Activated CD8-positive, alpha-beta T cell treated with anti-CD3 and anti-CD28 coated beads, Interleukin-2, amount 10 ng/mL, durations not matched to agents 7 days and 5 days (primary cell): ENCODE measurements at regions of chr5 and their contacts with region 1.

Region 1: GRCh38 chr5:150409638-150410523 is 2.8 kb downstream of the CD74 start:
- DNase-seq: peak; percentile 65
- ATAC-seq: no peak
- H3K4me3 Mint-ChIP-seq: peak overlapping the region; percentile 98
- H3K27ac Mint-ChIP-seq: peak overlapping the region; percentile 100
- H3K4me1 Mint-ChIP-seq: peaks cover 45% of the 10 kb centered on the region
- H3K27me3 Mint-ChIP-seq: no peaks in the 10 kb centered on the region

Region 2: GRCh38 chr5:150112261-150113046 is 297.4 kb before region 1 on chr5:
- CTCF ChIA-PET with region 1: no interaction called
- POLR2A ChIA-PET with region 1: no interaction called
- DNase-seq: peak; percentile 18
- ATAC-seq: no peak
- H3K4me3 Mint-ChIP-seq: no peak overlapping the region
- H3K27ac Mint-ChIP-seq: peak overlapping the region; percentile 3
- H3K4me1 Mint-ChIP-seq: peaks cover 3% of the 10 kb centered on the region
- H3K27me3 Mint-ChIP-seq: peaks cover 10% of the 10 kb centered on the region

Region 3: GRCh38 chr5:150227606-150228273 is 182.1 kb before region 1 on chr5:
- CTCF ChIA-PET with region 1: no interaction called
- POLR2A ChIA-PET with region 1: no interaction called
- DNase-seq: no peak
- ATAC-seq: no peak
- H3K4me3 Mint-ChIP-seq: no peak overlapping the region
- H3K27ac Mint-ChIP-seq: no peak overlapping the region
- H3K4me1 Mint-ChIP-seq: no peaks in the 10 kb centered on the region
- H3K27me3 Mint-ChIP-seq: no peaks in the 10 kb centered on the region

Region 4: GRCh38 chr5:150436141-150436680 is 26.3 kb after region 1 on chr5:
- CTCF ChIA-PET with region 1: interaction called, 25 read pairs
- POLR2A ChIA-PET with region 1: interaction called, 8 read pairs
- DNase-seq: peak; percentile 95
- ATAC-seq: peak; percentile 99
- H3K4me3 Mint-ChIP-seq: peak overlapping the region; percentile 41
- H3K27ac Mint-ChIP-seq: peak overlapping the region; percentile 82
- H3K4me1 Mint-ChIP-seq: peaks cover 11% of the 10 kb centered on the region
- H3K27me3 Mint-ChIP-seq: peaks cover 2% of the 10 kb centered on the region

Region 5: DNA sequence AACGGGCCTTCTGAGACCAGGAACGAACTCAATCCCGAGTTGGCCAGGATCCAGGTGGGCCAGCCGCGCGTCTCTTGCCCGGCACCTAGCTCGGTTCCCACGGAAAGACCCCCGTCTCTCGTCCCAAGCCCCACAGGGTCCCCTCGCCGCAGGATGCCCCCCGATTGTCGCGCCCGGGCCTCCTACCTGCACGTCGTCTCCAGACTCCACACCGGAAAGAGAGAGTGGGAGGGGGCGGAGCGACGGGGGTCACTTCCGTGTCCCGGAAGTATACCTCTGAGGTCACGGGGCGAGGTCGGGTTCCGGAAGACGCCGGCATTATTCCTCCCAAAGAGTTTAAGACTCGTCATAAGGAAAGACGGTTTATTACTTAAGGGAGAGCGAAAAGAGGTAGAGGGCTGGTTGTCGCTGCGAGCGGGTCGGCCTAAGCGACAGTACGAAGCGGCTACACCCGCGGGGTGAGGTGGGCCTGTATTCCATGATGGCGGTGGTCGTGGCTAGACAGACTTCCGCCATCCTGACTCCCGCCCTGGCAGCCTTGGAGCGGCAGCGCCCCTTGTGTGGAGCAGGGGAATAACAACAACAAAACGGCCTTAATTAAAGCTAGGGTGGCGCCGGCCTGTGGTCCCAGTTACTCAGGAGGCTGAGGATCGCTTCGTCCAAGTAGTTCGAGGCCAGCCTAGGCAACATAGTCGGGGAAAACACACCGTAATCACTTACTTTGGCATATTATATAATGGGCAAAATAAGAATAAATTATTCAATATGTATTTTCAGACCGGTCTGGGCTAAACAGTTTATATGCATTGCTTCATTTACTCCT is 39.8 kb after region 1 on chr5 and contains the start of gene RPS14:
- CTCF ChIA-PET with region 1: interaction called, 6 read pairs
- POLR2A ChIA-PET with region 1: interaction called, 36 read pairs
- DNase-seq: peak; percentile 97
- ATAC-seq: peak; percentile 90
- H3K4me3 Mint-ChIP-seq: peak within 1 kb of the TSS; percentile 91
- H3K27ac Mint-ChIP-seq: peak within 1 kb of the TSS; percentile 99
- H3K4me1 Mint-ChIP-seq: peaks cover 35% of the 10 kb centered on the region
- H3K27me3 Mint-ChIP-seq: no peaks in the 10 kb centered on the region
- total RNA-seq, gene RPS14: 2,046 to 2,123 TPM

Region 6: GRCh38 chr5:150511578-150512367 is 101.9 kb after region 1 on chr5:
- CTCF ChIA-PET with region 1: no interaction called
- POLR2A ChIA-PET with region 1: no interaction called
- DNase-seq: no peak
- ATAC-seq: no peak
- H3K4me3 Mint-ChIP-seq: no peak overlapping the region
- H3K27ac Mint-ChIP-seq: no peak overlapping the region
- H3K4me1 Mint-ChIP-seq: peaks cover 3% of the 10 kb centered on the region
- H3K27me3 Mint-ChIP-seq: no peaks in the 10 kb centered on the region